ENCODE measurements at regions of chr22 and their contacts with region 1.

Region 1: DNA sequence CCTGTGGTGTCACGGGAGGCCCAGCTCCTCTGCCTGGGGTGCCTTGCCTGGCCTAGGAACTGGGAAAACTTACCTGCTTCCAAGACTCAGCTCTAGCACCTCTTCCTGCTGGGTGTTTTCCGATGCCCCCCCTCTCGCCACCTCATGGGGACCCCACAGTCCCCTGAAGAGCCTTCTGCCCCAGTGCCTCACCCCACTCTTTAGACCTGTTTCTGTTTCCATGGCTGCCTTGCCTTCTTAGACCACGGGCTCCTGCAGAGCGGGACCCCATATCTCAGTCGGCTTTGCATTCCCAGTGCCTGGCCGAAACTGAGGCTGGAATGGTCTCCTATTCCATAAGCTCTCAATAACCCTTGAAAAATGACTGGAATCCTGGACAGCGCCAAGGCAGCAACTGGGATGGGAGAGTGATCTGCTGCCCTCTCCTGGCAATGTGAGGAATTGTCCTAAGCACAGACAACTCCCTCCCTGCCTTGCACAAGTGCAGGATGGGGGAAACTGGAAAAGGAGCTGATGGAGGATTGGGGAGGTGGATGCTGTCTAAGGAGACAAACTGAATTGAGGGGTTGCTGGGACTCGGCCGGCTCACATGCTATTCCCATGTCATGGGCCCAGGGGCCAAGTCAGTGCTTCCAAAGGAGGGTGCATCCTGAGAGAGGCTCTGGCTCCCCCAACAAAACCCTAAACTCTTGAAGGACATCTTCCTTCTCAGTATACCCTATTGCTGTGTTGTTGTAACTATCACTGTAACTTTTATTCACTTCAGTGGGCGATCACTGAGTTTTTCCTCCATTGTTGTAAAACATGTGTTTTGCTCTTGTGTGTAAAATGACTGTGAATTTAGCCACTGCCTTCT is 26.6 kb upstream of the IL17RA start:
- DNase-seq: peak; percentile 36 to 84
- H3K4me3 ChIP-seq: no peak overlapping the region
- H3K27ac ChIP-seq: no peak overlapping the region
- H3K4me1 ChIP-seq: no peaks in the 10 kb centered on the region
- H3K27me3 ChIP-seq: peaks cover 0 to 2% (median 0%) of the 10 kb centered on the region in 4 experiments; a peak in 1 of 7 replicates
- CTCF ChIP-seq: peak; percentile 84 to 97 (median 96)
- EP300 ChIP-seq: no peak
- POLR2A ChIP-seq: no peak
- RAD21 ChIP-seq: peak; percentile 83 to 88

Region 2: GRCh38 chr22:16917144-16918003 is 140.8 kb before region 1 on chr22:
- CTCF ChIA-PET with region 1: interaction called, 40 read pairs
- POLR2A ChIA-PET with region 1: no interaction called
- DNase-seq: peak in 1 of 2 experiments; percentile 89
- H3K4me3 ChIP-seq: no peak overlapping the region
- H3K27ac ChIP-seq: no peak overlapping the region
- H3K4me1 ChIP-seq: no peaks in the 10 kb centered on the region
- H3K27me3 ChIP-seq: no peaks in the 10 kb centered on the region
- CTCF ChIP-seq: peak; percentile 67 to 80 (median 72)
- EP300 ChIP-seq: no peak
- POLR2A ChIP-seq: no peak
- RAD21 ChIP-seq: peak; percentile 63 to 71

Region 3: GRCh38 chr22:16925407-16925966 is 132.7 kb before region 1 on chr22:
- CTCF ChIA-PET with region 1: interaction called, 13 read pairs
- POLR2A ChIA-PET with region 1: no interaction called
- DNase-seq: no peak
- H3K4me3 ChIP-seq: no peak overlapping the region
- H3K27ac ChIP-seq: no peak overlapping the region
- H3K4me1 ChIP-seq: no peaks in the 10 kb centered on the region
- H3K27me3 ChIP-seq: no peaks in the 10 kb centered on the region; a peak in 2 of 7 replicates
- CTCF ChIP-seq: no peak
- EP300 ChIP-seq: no peak
- POLR2A ChIP-seq: no peak
- RAD21 ChIP-seq: no peak

Region 4: DNA sequence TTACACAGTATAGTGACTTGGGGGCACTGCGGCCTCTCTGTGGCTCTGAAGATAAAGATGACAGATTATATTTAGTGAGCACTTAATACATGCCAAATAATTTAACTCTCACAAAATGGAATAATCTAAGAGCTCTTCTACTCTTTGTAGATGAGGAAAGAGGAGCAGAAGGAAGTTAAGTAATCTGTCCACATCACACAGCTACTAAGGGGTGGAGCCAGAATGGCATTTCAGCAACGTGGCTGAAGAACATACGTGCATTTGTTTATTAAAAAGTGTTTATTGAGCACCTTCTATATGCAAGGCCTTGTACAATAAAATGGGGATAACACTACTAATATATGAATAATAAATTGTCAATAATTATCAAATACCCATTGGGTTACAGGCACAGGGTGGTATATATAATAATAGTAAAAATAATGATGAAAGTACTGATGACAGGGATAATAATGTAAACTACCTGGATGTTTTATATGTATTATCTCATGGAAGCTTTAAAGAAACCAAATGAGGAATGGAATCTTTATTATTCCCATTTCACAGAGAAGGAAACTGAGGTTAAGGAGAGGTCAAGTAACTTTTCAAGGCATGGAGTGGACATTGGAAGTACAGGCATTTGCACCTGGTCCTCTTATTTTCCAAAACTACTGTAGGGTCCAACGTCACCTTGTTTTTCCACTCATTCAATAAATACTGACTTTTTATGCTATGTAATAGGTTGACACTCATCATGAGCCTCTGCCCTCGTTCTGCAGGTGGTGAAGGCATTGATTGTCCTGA is 11.4 kb before region 1 on chr22:
- CTCF ChIA-PET with region 1: interaction called, 12 read pairs
- POLR2A ChIA-PET with region 1: no interaction called
- DNase-seq: no peak
- H3K4me3 ChIP-seq: no peak overlapping the region
- H3K27ac ChIP-seq: no peak overlapping the region
- H3K4me1 ChIP-seq: no peaks in the 10 kb centered on the region
- H3K27me3 ChIP-seq: no peaks in the 10 kb centered on the region; a peak in 3 of 7 replicates
- CTCF ChIP-seq: no peak
- EP300 ChIP-seq: no peak
- POLR2A ChIP-seq: no peak
- RAD21 ChIP-seq: no peak

Region 5: DNA sequence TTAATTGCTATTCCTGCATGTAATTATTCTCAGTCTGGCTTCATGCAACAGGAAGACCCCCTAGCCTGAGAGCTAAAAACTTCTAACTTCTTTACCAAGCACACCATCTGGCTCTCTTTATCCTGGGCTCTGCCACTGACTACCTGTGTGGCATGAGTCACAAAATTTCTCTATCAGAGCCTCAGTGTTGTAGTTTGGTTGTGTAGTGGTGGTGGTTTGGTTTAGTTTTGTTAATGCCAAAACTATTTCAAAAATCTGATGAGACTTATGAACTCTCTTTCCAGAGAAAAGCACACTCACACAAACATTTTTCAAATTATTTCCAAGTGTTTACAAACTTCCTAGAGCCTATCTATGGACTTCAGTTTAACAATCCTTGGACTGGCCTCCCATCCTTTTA is 19.1 kb after region 1 on chr22:
- CTCF ChIA-PET with region 1: interaction called, 12 read pairs
- POLR2A ChIA-PET with region 1: no interaction called
- DNase-seq: no peak
- H3K4me3 ChIP-seq: no peak overlapping the region
- H3K27ac ChIP-seq: no peak overlapping the region
- H3K4me1 ChIP-seq: no peaks in the 10 kb centered on the region
- H3K27me3 ChIP-seq: no peaks in the 10 kb centered on the region
- CTCF ChIP-seq: no peak
- EP300 ChIP-seq: no peak
- POLR2A ChIP-seq: no peak
- RAD21 ChIP-seq: no peak

Region 6: GRCh38 chr22:17213976-17214375 is 155.8 kb after region 1 on chr22:
- CTCF ChIA-PET with region 1: no interaction called
- POLR2A ChIA-PET with region 1: no interaction called
- DNase-seq: peak in 1 of 2 experiments; percentile 72
- H3K4me3 ChIP-seq: no peak overlapping the region
- H3K27ac ChIP-seq: no peak overlapping the region
- H3K4me1 ChIP-seq: peaks cover 5 to 11% (median 8%) of the 10 kb centered on the region in 4 experiments; a peak in 6 of 7 replicates
- H3K27me3 ChIP-seq: no peaks in the 10 kb centered on the region
- CTCF ChIP-seq: peak; percentile 67 to 81 (median 77)
- EP300 ChIP-seq: no peak
- POLR2A ChIP-seq: no peak
- RAD21 ChIP-seq: peak; percentile 56 to 67

Region 7: GRCh38 chr22:17228725-17229126 is 170.5 kb after region 1 on chr22:
- CTCF ChIA-PET with region 1: no interaction called
- POLR2A ChIA-PET with region 1: no interaction called
- DNase-seq: no peak
- H3K4me3 ChIP-seq: no peak overlapping the region
- H3K27ac ChIP-seq: no peak overlapping the region
- H3K4me1 ChIP-seq: peaks cover 8 to 18% (median 13%) of the 10 kb centered on the region in 4 experiments
- H3K27me3 ChIP-seq: no peaks in the 10 kb centered on the region
- CTCF ChIP-seq: no peak
- EP300 ChIP-seq: no peak
- POLR2A ChIP-seq: no peak
- RAD21 ChIP-seq: no peak